BJ (cell line): ENCODE measurements at regions of chr3 and their contacts with region 1.

Region 1: GRCh38 chr3:188154014-188154808 is at the start of gene LPP:
- DNase-seq: no peak
- H3K4me3 ChIP-seq: peak within 1 kb of the TSS; percentile 79
- H3K27me3 ChIP-seq: no peaks in the 10 kb centered on the region
- CTCF ChIP-seq: no peak
- polyA plus RNA-seq, gene LPP: 33.3 and 60.0 TPM in 2 replicates

Region 2: DNA sequence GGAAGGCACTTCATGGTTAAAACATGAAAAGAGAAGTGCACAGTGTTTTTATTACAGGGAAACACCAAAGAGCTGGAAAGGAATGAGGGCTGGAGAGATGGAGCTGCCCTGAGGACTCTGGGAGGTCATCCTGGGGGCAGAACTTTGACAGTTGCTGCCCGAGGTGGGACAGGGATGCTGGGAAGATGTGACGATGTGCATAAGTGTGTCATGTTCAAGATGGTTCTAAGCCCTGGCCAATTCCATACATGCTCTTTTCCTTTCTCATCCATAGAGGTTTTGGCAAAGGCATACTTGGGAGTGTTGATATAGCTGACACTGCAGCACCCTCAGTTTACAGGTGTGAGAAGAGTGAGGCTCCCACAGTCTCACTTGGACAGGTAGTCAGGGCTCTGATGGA is 23.5 kb after region 1 on chr3:
- CTCF ChIA-PET with region 1: no interaction called
- POLR2A ChIA-PET with region 1: no interaction called
- DNase-seq: no peak
- H3K4me3 ChIP-seq: no peak overlapping the region
- H3K27me3 ChIP-seq: no peaks in the 10 kb centered on the region
- CTCF ChIP-seq: no peak

Region 3: DNA sequence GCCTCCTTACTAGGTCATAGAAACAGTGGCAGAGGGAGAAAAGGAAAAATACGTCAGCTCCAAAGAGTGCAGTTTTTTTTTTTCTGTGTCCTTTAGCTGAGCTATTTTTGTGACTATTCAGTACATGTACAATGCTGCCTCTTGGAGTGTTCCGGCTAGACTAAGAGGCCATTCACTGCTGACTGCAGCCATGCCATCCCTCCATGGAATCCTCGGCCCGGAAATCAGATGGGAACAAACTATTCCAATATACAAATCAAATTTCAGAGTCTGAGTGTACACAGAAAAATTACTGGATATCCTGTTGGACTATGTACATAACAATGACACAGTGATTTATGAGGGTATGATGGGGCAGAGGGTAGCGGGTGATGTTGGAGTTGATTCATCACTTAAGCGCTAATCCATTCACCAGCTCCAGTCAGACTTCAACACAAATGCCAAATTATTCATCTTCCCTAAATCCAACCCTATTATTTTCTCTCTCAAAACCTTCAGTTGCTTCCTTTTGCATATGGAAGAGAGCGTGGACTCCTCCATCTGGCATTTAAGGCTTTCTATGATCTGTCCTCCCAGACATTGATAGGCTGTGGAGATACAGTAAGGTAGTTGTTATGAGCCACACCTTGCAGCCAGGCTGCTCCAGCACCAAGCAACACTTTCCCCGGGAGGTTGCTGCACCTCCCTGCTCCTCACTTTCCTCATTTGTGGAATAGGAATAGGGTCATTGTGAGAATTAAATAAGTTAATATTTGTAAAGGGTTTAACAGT is 108.9 kb after region 1 on chr3:
- CTCF ChIA-PET with region 1: no interaction called
- POLR2A ChIA-PET with region 1: interaction called, 10 read pairs
- DNase-seq: peak; percentile 42
- H3K4me3 ChIP-seq: no peak overlapping the region
- H3K27me3 ChIP-seq: no peaks in the 10 kb centered on the region
- CTCF ChIP-seq: no peak

Region 4: GRCh38 chr3:188294823-188295487 is 140.7 kb after region 1 on chr3:
- CTCF ChIA-PET with region 1: no interaction called
- POLR2A ChIA-PET with region 1: interaction called, 11 read pairs
- DNase-seq: peak; percentile 91
- H3K4me3 ChIP-seq: no peak overlapping the region
- H3K27me3 ChIP-seq: no peaks in the 10 kb centered on the region
- CTCF ChIP-seq: no peak